Transverse colon (tissue), 4 donors: ENCODE measurements at regions of chr1 and their contacts with region 1.

Region 1: GRCh38 chr1:93764042-93764750 is 82.6 kb upstream of the BCAR3 start:
- DNase-seq: no peak
- H3K4me3 ChIP-seq: no peak overlapping the region
- H3K27ac ChIP-seq: no peak overlapping the region
- H3K4me1 ChIP-seq: peaks cover 0 to 8% (median 3%) of the 10 kb centered on the region in 4 donors
- H3K27me3 ChIP-seq: no peaks in the 10 kb centered on the region
- CTCF ChIP-seq: no peak
- EP300 ChIP-seq: no peak
- POLR2A ChIP-seq: no peak

Region 2: DNA sequence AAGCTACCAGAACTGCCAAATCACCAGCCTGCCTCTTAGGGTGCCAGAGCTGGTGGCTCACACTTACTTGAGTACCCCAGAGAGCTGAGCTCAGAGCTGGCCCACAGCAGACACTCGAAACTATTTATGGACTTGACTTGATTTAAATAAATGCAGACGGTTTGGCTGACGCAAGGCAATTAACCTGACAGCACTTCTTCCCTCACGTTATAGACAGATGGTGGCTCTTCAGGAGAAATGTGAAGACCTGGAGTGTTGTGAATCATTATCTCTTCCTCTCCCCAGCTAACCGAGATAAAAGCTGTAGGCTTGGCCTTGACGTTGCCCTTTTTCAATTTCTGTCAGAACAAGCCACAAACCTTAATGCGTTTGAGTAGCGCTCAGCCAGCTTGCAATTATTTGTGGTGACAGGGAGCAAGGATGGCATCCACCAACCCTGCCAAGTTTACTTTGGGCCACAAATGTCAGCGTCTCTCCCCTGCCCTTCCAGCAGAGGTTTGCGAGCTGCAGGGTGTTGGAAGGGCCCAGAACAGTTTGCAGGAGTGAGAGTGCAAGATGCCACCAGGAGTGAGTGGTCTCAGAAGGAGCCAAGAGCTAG is 48.6 kb before region 1 on chr1:
- in situ Hi-C with region 1: no loop called
- intact Hi-C with region 1: no loop called
- DNase-seq: no peak
- H3K4me3 ChIP-seq: no peak overlapping the region
- H3K27ac ChIP-seq: no peak overlapping the region
- H3K4me1 ChIP-seq: no peaks in the 10 kb centered on the region
- H3K27me3 ChIP-seq: no peaks in the 10 kb centered on the region
- CTCF ChIP-seq: no peak
- EP300 ChIP-seq: no peak
- POLR2A ChIP-seq: no peak

Region 3: DNA sequence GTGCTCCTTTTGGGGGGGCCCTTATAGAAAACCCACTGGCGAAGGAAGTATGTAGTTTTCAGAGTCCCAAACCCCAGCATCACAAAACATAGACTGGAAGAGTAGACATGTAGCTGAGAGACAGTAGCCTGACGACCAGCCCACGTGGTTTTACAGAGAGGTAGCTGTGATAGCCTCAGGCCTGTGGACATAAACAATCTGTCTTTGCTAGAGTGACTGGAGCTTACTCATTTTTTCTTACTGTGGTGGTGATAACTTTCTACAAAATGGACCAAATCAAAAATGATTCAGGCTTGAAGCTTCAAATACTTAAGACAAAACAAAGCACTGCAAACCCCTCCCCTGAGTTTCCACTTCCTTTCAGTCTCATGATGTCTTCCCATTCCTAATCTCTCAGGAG is 1966.8 kb after region 1 on chr1:
- in situ Hi-C with region 1: no loop called
- intact Hi-C with region 1: loop called (anchors 5 kb)
- DNase-seq: no peak
- H3K4me3 ChIP-seq: no peak overlapping the region
- H3K27ac ChIP-seq: no peak overlapping the region
- H3K4me1 ChIP-seq: no peaks in the 10 kb centered on the region
- H3K27me3 ChIP-seq: no peaks in the 10 kb centered on the region
- CTCF ChIP-seq: no peak
- EP300 ChIP-seq: no peak
- POLR2A ChIP-seq: no peak